ENCODE measurements at regions of chrX and their contacts with region 1.

Region 1: DNA sequence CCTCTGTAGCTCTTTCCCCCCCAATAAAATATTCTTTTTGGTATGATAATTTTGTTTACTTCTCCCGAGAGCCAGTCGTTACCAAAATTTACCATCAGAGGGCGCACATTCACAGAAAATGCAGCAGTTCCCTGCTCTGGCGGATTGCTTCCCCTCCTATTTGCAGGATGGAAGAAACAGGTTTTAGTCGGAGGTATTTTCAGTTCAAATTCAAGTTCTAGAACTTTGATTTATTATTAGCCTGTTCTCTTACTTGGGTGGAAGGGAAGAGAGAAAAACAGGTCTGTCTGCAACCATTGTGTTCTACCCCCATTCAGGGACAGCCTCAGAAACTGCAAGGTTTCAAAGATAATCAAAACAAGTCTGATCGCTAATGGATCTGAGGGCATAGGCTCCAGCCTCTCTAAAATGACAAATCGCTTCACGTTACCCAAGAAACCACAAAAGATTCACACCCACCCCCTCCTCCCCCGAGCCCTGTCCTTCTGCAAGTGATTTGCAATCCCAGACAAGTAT is 263.8 kb upstream of the RPS6KA3 start:
- DNase-seq: peak; percentile 18 to 70 (median 42)
- ATAC-seq: no peak
- H3K4me3 ChIP-seq: no peak overlapping the region
- H3K4me3 Mint-ChIP-seq: no peak overlapping the region
- H3K27ac ChIP-seq: no peak overlapping the region
- H3K27ac Mint-ChIP-seq: no peak overlapping the region
- H3K4me1 ChIP-seq: no peaks in the 10 kb centered on the region
- H3K4me1 Mint-ChIP-seq: peaks cover 6% of the 10 kb centered on the region
- H3K27me3 ChIP-seq: peaks cover 8 to 10% of the 10 kb centered on the region in 2 experiments
- H3K27me3 Mint-ChIP-seq: peaks cover 53% of the 10 kb centered on the region
- CTCF ChIP-seq: peak; percentile 59

Region 2: GRCh38 chrX:21479695-21480270 is 949.3 kb after region 1 on chrX:
- CTCF ChIA-PET with region 1: interaction called, 5 read pairs
- POLR2A ChIA-PET with region 1: no interaction called
- intact Hi-C with region 1: loop called (anchors 1 to 2 kb)
- DNase-seq: peak in 5 of 14 experiments; percentile 0 to 61 (median 51)
- ATAC-seq: peak; percentile 59
- H3K4me3 ChIP-seq: no peak overlapping the region
- H3K4me3 Mint-ChIP-seq: no peak overlapping the region
- H3K27ac ChIP-seq: no peak overlapping the region
- H3K27ac Mint-ChIP-seq: no peak overlapping the region
- H3K4me1 ChIP-seq: peaks cover 3% of the 10 kb centered on the region
- H3K4me1 Mint-ChIP-seq: peaks cover 7% of the 10 kb centered on the region
- H3K27me3 ChIP-seq: no peaks in the 10 kb centered on the region
- H3K27me3 Mint-ChIP-seq: no peaks in the 10 kb centered on the region
- CTCF ChIP-seq: peak; percentile 57

Region 3: GRCh38 chrX:21725496-21725895 is 1195.0 kb after region 1 on chrX:
- CTCF ChIA-PET with region 1: interaction called, 4 read pairs
- POLR2A ChIA-PET with region 1: interaction called, 3 read pairs
- intact Hi-C with region 1: loop called (anchors 1 to 2 kb)
- DNase-seq: peak in 3 of 14 experiments; percentile 10 to 37 (median 31)
- ATAC-seq: no peak
- H3K4me3 ChIP-seq: no peak overlapping the region
- H3K4me3 Mint-ChIP-seq: no peak overlapping the region
- H3K27ac ChIP-seq: no peak overlapping the region
- H3K27ac Mint-ChIP-seq: no peak overlapping the region
- H3K4me1 ChIP-seq: no peaks in the 10 kb centered on the region
- H3K4me1 Mint-ChIP-seq: no peaks in the 10 kb centered on the region
- H3K27me3 ChIP-seq: no peaks in the 10 kb centered on the region
- H3K27me3 Mint-ChIP-seq: peaks cover 9% of the 10 kb centered on the region
- CTCF ChIP-seq: peak; percentile 33

Region 4: GRCh38 chrX:21745756-21746155 is 1215.3 kb after region 1 on chrX:
- CTCF ChIA-PET with region 1: interaction called, 3 read pairs
- POLR2A ChIA-PET with region 1: no interaction called
- intact Hi-C with region 1: loop called (anchors 1 to 2 kb)
- DNase-seq: peak in 13 of 14 experiments; percentile 5 to 54 (median 24)
- ATAC-seq: no peak
- H3K4me3 ChIP-seq: no peak overlapping the region
- H3K4me3 Mint-ChIP-seq: no peak overlapping the region
- H3K27ac ChIP-seq: no peak overlapping the region
- H3K27ac Mint-ChIP-seq: no peak overlapping the region
- H3K4me1 ChIP-seq: no peaks in the 10 kb centered on the region
- H3K4me1 Mint-ChIP-seq: no peaks in the 10 kb centered on the region
- H3K27me3 ChIP-seq: peaks cover 0 to 4% of the 10 kb centered on the region in 2 experiments
- H3K27me3 Mint-ChIP-seq: peaks cover 7% of the 10 kb centered on the region
- CTCF ChIP-seq: peak; percentile 59